ENCODE measurements at regions of chr9 and their contacts with region 1.

Region 1: DNA sequence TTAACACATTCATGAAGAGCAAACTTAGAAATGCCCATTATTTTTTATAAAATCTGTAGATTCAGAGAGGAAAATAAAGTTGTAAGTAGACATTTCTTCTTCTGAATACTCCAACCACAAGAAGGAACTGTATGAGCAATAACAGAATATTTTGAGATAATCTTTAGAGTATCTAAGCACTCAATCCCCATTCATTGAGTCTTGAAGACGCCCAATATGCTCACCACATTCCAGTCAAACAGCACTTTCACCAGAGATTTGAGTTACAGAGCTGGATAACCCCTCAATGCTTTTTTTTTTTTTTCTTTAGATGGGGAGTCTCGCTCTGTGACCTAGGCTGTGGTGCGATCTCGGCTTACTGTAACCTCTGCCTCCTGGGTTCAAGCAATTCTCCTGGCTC is 14.7 kb upstream of the RIC1 start:
- DNase-seq: no peak
- H3K4me3 Mint-ChIP-seq: no peak overlapping the region
- H3K27ac Mint-ChIP-seq: no peak overlapping the region
- H3K4me1 Mint-ChIP-seq: peaks cover 27% of the 10 kb centered on the region
- H3K27me3 Mint-ChIP-seq: no peaks in the 10 kb centered on the region

Region 2: DNA sequence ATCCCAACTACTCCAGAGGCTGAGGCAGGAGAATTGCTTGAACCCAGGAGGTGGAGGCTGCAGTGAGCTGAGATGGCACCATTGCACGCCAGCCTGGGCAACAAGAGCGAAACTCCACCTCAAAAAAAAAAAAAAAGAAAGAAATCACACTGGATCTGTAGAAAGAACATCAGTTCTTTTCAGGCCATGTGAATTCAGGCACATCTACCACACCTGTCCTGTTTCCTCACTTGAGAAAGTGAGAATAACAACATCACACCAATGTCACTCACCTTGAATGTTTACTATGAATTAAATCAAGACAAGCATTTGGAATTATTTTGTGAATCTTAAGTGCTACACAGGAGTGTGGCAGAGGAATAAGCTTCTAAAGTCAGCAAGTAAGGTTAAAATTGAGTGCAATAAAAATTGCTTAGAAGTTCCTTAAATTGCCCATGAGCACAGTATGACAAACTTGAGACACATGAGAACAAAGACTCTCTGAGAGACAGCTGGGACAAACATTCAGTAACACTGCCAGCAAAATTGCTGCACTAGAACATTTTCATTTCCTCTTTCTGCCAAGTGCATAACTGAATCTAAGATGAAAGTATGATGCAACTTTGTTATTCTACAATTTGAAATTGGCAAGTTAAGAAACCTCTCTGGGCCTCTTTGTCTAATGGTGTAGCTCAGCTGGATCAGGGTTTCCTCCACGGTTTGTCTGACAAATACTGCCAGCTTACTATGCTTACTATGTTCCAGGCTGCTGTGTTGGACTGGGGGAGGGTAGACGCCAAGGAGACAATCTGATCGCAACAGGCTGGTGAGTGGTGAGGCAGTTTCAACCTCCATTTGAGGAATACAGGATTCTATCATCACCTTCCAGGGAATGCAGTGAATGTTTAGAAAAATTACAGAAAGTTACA is 12.8 kb after region 1 on chr9:
- CTCF ChIA-PET with region 1: no interaction called
- POLR2A ChIA-PET with region 1: interaction called, 13 read pairs
- DNase-seq: peak; percentile 61
- H3K4me3 Mint-ChIP-seq: peak overlapping the region; percentile 98
- H3K27ac Mint-ChIP-seq: peak overlapping the region; percentile 98
- H3K4me1 Mint-ChIP-seq: peaks cover 40% of the 10 kb centered on the region
- H3K27me3 Mint-ChIP-seq: no peaks in the 10 kb centered on the region

Measured in activated CD4-positive, alpha-beta T cell treated with anti-CD3 and anti-CD28 coated beads, Interleukin-2, amount 10 ng/mL, durations not matched to agents 7 days and 5 days (primary cell).